ENCODE measurements at regions of chr16 and their contacts with region 1.

Region 1: GRCh38 chr16:18801197-18801972 is at the start of gene ARL6IP1:
- DNase-seq: peak; percentile 99
- H3K4me3 Mint-ChIP-seq: peak within 1 kb of the TSS; percentile 98
- H3K27ac Mint-ChIP-seq: peak within 1 kb of the TSS; percentile 95
- H3K4me1 Mint-ChIP-seq: peaks cover 57% of the 10 kb centered on the region
- H3K27me3 Mint-ChIP-seq: peaks cover 2% of the 10 kb centered on the region
- total RNA-seq, gene ARL6IP1: 110 to 125 TPM

Region 2: GRCh38 chr16:18816286-18816685 is 14.9 kb after region 1 on chr16:
- CTCF ChIA-PET with region 1: interaction called, 19 read pairs
- POLR2A ChIA-PET with region 1: no interaction called
- intact Hi-C with region 1: no loop called
- DNase-seq: no peak
- H3K4me3 Mint-ChIP-seq: no peak overlapping the region
- H3K27ac Mint-ChIP-seq: no peak overlapping the region
- H3K4me1 Mint-ChIP-seq: peaks cover 17% of the 10 kb centered on the region
- H3K27me3 Mint-ChIP-seq: no peaks in the 10 kb centered on the region

Region 3: GRCh38 chr16:18839555-18839954 is 38.2 kb after region 1 on chr16:
- CTCF ChIA-PET with region 1: interaction called, 12 read pairs
- POLR2A ChIA-PET with region 1: interaction called, 5 read pairs
- intact Hi-C with region 1: loop called (anchors 5 kb)
- DNase-seq: no peak
- H3K4me3 Mint-ChIP-seq: no peak overlapping the region
- H3K27ac Mint-ChIP-seq: no peak overlapping the region
- H3K4me1 Mint-ChIP-seq: peaks cover 17% of the 10 kb centered on the region
- H3K27me3 Mint-ChIP-seq: no peaks in the 10 kb centered on the region

Region 4: DNA sequence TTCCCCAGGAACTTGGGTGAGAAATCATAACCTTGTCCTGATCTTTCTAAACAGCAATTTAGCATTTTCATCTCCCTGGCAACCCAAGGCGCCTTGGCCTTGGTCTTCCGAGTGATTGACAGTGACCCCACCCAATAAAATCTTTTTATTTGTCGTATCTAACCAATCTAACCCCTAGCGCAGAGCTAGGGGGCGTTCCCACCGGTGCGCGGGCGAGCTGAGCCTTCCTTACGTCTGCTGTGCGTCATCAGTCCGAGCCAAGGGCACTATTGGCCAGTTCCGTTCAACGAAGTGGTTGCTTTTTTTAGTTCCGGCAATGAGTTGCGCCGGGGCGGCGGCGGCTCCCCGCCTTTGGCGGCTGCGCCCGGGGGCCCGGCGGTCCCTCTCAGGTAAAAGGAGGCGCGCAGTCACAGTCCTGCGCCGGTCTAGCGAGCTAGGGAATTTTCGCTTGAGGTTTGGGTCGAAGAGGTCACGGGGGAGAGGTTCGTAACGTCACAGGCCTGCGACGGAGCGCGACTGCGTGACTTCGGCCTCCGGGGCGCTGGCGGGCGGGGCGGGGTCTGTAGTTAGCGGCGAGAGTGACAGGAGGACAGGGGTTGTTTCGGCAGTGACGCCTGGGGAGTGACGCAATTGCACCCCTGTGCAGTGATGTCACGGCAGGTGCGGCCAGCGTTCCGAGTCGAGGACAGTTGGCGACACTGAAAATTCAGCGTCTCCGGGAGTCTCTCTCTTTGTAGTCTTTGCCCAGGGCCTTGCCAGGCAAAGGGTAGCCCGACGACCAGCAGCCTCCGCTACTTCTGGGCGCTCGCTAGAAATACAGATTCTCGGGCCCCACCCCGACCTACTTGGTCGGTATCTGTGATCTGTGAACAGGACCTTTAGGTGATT is 266.2 kb after region 1 on chr16 and contains the start of gene COQ7:
- CTCF ChIA-PET with region 1: no interaction called
- POLR2A ChIA-PET with region 1: no interaction called
- intact Hi-C with region 1: loop called (anchors 2 kb)
- DNase-seq: peak; percentile 99
- H3K4me3 Mint-ChIP-seq: peak within 1 kb of the TSS; percentile 91
- H3K27ac Mint-ChIP-seq: peak within 1 kb of the TSS; percentile 93
- H3K4me1 Mint-ChIP-seq: peaks cover 7% of the 10 kb centered on the region
- H3K27me3 Mint-ChIP-seq: no peaks in the 10 kb centered on the region
- total RNA-seq, gene COQ7: 14.1 to 15.2 TPM

Measured in activated CD4-positive, alpha-beta memory T cell treated with anti-CD3 and anti-CD28 coated beads for 36 hours (primary cell).